Heart left ventricle (tissue), 16 donors: ENCODE measurements at regions of chr11 and their contacts with region 1.

Region 1: GRCh38 chr11:61679893-61680621 is at the start of gene DAGLA:
- DNase-seq: peak; percentile 64 to 91 (median 74)
- ATAC-seq: peak in 3 of 4 donors; percentile 53 to 78 (median 78)
- H3K4me3 ChIP-seq: peak within 1 kb of the TSS; percentile 17 to 72 (median 56)
- H3K27ac ChIP-seq: peak within 1 kb of the TSS in 5 of 12 donors; percentile 33 to 65 (median 49)
- H3K4me1 ChIP-seq: peaks cover 0 to 53% (median 24%) of the 10 kb centered on the region in 12 donors
- H3K27me3 ChIP-seq: peaks cover 0 to 6% (median 0%) of the 10 kb centered on the region in 9 donors
- CTCF ChIP-seq: peak; percentile 88 to 99 (median 96)
- POLR2A ChIP-seq: peak in 1 of 2 donors; percentile 28
- total RNA-seq, gene DAGLA: 2.4 to 5.6 (median 3.8) TPM

Region 2: DNA sequence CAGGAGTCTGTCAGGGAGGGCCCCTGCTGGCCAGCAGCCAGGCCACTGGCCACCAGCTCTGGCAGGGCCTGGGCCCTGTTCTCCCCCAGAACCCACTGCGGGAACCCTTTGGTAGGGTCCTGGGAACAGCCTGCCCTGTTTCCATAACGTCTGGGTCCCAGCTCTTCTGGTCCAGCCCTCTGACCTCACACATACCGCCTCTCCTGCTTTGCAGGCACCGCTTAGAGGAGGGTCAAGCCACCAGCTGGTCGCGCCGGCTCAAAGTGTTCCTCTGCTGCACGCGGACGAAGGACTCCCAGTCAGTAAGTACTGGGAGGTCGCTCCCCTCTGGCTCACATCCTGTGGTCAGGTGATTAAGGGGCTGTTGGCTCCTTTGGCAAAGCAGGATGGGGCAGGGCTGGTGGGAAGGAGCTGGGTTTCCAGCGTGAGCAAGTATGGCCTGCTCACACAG is 45.7 kb after region 1 on chr11:
- intact Hi-C with region 1: loop called in 1 of 10 experiments (anchors 2 kb)
- DNase-seq: no peak
- ATAC-seq: no peak
- H3K4me3 ChIP-seq: no peak overlapping the region
- H3K27ac ChIP-seq: no peak overlapping the region
- H3K4me1 ChIP-seq: peaks cover 0 to 22% (median 0%) of the 10 kb centered on the region in 12 donors
- H3K27me3 ChIP-seq: no peaks in the 10 kb centered on the region
- CTCF ChIP-seq: no peak
- POLR2A ChIP-seq: no peak

Region 3: DNA sequence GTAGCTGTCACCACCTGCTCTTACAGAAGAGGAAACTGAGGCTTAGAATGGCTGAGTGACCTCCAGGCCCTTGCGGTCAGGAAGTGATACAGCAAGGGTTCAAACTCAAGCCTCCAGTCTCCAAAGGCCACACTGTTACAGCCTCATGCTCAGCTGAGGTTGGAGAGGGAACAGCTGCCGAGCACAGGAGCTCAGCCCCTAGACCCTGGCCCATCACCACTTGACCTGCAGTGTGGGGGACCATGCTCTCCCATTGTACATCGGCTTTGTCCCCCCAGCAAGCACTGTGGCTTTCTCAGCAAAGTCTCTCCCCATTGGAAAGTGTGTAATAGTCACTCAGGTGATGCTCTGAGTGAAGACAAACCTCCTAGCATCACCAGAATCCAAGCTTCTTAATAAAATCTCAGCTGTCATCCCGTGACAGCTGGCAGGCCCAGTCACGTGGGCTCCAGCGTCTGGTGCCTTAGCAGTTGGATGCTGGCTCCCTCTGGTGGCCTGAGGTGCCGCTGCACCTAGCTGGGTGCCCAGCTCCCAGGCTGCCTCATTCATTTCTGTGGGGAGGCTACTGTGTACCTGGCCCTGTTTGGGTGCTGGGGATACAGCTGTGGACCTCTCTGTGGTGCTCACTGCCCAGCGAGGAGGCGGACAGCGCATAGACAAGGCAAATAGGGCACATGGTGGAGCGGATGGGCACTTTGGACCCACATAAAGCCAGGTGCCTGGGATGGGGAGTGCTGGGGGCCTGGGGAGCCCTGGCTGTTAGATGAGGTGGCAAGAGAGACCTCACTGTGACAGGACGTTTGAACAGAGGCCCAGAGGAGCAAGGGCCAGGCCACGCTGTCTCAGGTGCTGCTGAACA is 53.3 kb after region 1 on chr11:
- intact Hi-C with region 1: loop called (anchors 1 to 2 kb)
- DNase-seq: peak; percentile 83 to 93 (median 87)
- ATAC-seq: peak; percentile 74 to 90 (median 84)
- H3K4me3 ChIP-seq: no peak overlapping the region
- H3K27ac ChIP-seq: peak overlapping the region in 4 of 12 donors; percentile 12 to 59 (median 37)
- H3K4me1 ChIP-seq: peaks cover 0 to 27% (median 9%) of the 10 kb centered on the region in 12 donors
- H3K27me3 ChIP-seq: no peaks in the 10 kb centered on the region
- CTCF ChIP-seq: peak; percentile 98 to 100 (median 99)
- POLR2A ChIP-seq: no peak

Region 4: DNA sequence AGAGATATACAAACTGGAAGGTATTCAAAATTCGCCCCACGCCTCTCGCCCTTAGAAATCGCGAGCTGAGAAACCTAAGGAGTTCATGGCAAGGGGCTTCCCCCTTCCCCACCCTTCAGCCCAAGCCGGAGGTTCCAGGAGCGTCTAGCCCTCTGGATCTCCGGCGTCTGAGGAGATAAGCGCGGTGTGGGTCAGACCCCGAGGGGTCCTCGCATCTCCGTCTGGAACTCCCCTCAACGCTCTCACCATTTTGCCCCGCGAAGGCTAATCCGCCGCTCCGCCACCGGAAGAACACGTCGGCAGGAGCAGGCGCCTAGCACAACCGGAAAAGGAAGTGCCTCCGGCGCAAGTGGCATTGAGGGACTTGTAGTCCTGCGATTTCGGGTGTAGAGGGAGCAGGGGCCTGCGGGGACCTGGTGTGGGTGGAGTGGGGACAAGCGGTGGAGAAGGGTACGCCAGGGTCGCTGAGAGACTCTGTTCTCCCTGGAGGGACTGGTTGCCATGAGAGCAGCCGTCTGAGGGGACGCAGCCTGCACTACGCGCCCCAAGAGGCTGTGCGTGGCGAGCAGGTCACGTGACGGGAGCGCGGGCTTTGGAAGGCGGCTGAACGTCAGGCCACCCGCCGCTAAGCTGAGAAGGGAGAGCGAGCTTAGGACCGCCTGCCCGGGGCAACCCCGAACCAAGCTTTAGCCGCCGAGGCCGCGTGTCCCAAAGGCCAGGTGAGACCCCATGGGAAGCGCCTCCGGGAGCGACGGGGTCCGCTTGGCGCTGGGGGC is 112.4 kb after region 1 on chr11 and contains the starts of genes FEN1 and TMEM258:
- intact Hi-C with region 1: no loop called
- DNase-seq: peak; percentile 89 to 94 (median 93)
- ATAC-seq: peak; percentile 88 to 94 (median 93)
- H3K4me3 ChIP-seq: peak within 1 kb of the TSS; percentile 62 to 92 (median 72)
- H3K27ac ChIP-seq: peak within 1 kb of the TSS; percentile 89 to 99 (median 96)
- H3K4me1 ChIP-seq: peaks cover 6 to 26% (median 19%) of the 10 kb centered on the region in 12 donors
- H3K27me3 ChIP-seq: no peaks in the 10 kb centered on the region
- CTCF ChIP-seq: peak in 2 of 12 donors; percentile 8 to 10
- POLR2A ChIP-seq: peak in 1 of 2 donors; percentile 62
- total RNA-seq, gene FEN1: 3.9 to 13.7 (median 6.8) TPM
- total RNA-seq, gene TMEM258: 48.0 to 129 (median 103) TPM

Region 5: DNA sequence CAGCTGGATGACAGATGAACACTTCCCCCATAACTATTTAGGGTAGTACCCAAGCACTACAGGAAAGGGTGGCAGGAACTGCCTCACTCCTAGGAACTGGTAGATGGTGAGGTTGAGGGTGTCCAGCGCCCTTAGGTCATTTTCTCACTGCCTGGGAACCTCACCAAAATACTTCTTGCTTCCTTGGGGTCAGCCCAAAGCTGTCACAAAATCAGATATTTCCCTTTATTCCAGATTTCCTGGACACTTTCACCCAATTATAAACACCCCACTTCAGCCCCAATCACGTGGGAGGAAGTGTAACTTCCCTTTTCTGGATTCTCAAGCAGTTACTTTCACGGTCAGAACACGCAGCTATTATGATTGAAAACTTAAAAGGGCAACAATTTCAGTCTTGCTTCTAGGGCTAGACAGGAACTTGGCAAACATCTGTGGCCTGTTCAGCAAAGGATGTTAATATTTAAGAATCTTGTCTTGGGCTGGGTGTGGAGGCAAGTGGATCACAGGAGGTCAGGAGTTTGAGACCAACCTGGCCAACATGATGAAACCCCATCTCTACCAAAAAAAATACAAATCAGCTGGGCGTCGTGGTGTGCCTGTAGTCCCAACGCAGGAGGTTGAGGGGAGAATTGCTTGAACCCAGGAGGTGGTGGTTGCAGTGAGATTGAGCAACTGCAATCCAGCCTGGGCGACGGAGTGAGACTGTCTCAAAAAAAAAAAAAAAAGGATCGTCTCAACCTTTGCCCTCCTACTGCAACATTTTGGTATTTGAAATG is 283.4 kb after region 1 on chr11:
- intact Hi-C with region 1: no loop called
- DNase-seq: peak in 1 of 5 donors; percentile 34
- ATAC-seq: peak in 2 of 4 donors; percentile 1 to 22
- H3K4me3 ChIP-seq: peak overlapping the region in 5 of 12 donors; percentile 66 to 98 (median 91)
- H3K27ac ChIP-seq: peak overlapping the region; percentile 29 to 100 (median 84)
- H3K4me1 ChIP-seq: peaks cover 6 to 64% (median 53%) of the 10 kb centered on the region in 12 donors
- H3K27me3 ChIP-seq: no peaks in the 10 kb centered on the region
- CTCF ChIP-seq: no peak
- POLR2A ChIP-seq: no peak